ENCODE measurements at regions of chr4 and their contacts with region 1.

Region 1: GRCh38 chr4:40840985-40841571 is 91.3 kb downstream of the NSUN7 start:
- DNase-seq: peak; percentile 95
- ATAC-seq: peak; percentile 90
- H3K4me3 Mint-ChIP-seq: no peak overlapping the region
- H3K27ac Mint-ChIP-seq: no peak overlapping the region
- H3K4me1 Mint-ChIP-seq: peaks cover 5% of the 10 kb centered on the region
- H3K27me3 Mint-ChIP-seq: peaks cover 7% of the 10 kb centered on the region
- CTCF ChIP-seq: peak; percentile 77

Region 2: DNA sequence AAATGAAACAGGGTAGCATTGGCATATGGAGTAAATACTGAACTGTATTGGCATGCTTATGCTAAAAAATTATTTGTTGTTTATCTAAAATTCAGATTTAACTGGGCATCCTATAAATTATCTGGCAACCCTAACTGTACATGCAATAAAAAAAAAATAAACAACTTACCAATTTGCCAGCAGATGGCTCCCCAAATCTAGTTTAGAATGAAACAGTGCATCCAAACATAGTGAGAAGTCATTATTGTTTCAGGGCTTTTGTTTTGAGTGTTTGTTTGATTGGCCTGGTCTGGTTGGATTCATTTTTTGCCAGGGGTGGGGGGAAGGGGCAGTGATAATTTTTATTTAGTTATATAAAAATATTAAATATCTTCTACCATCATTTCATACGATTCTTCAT is 104.2 kb before region 1 on chr4:
- CTCF ChIA-PET with region 1: interaction called, 89 read pairs
- POLR2A ChIA-PET with region 1: no interaction called
- intact Hi-C with region 1: loop called (anchors 5 kb)
- DNase-seq: peak; percentile 29
- ATAC-seq: no peak
- H3K4me3 Mint-ChIP-seq: no peak overlapping the region
- H3K27ac Mint-ChIP-seq: no peak overlapping the region
- H3K4me1 Mint-ChIP-seq: peaks cover 9% of the 10 kb centered on the region
- H3K27me3 Mint-ChIP-seq: peaks cover 3% of the 10 kb centered on the region
- CTCF ChIP-seq: peak; percentile 31

Region 3: GRCh38 chr4:40856277-40856821 is 15.3 kb after region 1 on chr4:
- CTCF ChIA-PET with region 1: interaction called, 13 read pairs
- POLR2A ChIA-PET with region 1: no interaction called
- intact Hi-C with region 1: no loop called
- DNase-seq: no peak
- ATAC-seq: no peak
- H3K4me3 Mint-ChIP-seq: peak overlapping the region; percentile 61
- H3K27ac Mint-ChIP-seq: no peak overlapping the region
- H3K4me1 Mint-ChIP-seq: no peaks in the 10 kb centered on the region
- H3K27me3 Mint-ChIP-seq: peaks cover 53% of the 10 kb centered on the region
- CTCF ChIP-seq: no peak

Region 4: GRCh38 chr4:40881851-40882250 is 40.8 kb after region 1 on chr4:
- CTCF ChIA-PET with region 1: no interaction called
- POLR2A ChIA-PET with region 1: no interaction called
- intact Hi-C with region 1: no loop called
- DNase-seq: no peak
- ATAC-seq: no peak
- H3K4me3 Mint-ChIP-seq: no peak overlapping the region
- H3K27ac Mint-ChIP-seq: no peak overlapping the region
- H3K4me1 Mint-ChIP-seq: no peaks in the 10 kb centered on the region
- H3K27me3 Mint-ChIP-seq: peaks cover 9% of the 10 kb centered on the region
- CTCF ChIP-seq: no peak

Region 5: DNA sequence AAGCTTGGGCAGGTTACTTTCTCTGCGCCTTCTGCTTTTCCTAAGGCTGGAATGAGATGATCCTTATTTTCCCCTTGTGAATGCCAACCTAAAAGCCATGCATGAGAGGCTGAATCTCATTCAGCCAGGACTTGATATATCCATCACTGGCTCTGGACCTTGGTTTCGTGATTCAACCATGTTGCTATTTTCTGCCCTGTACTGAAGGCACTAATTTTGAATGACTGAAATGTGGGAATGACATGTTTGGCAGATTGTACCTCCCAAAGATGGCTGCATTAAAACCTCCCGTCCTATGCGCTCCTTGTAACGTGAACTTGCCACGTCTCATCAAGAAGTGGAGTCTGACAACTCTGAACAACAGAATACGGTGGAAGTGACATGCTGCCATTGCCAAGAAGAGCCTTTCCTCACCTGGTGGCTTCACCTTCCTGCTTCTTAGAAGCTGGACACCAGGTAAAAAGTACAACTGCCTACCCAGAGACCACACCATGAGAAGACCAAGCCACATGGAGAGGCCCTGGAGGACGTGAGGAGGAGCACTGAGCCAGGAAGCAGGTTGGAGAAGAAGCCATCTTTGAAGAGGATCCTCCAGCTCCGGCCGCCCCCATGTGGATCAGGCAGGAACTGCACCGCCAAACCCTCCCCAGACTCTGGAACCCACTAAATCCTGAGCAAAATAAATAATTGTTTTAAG is 83.2 kb after region 1 on chr4:
- CTCF ChIA-PET with region 1: interaction called, 10 read pairs
- POLR2A ChIA-PET with region 1: interaction called, 3 read pairs
- intact Hi-C with region 1: no loop called
- DNase-seq: peak; percentile 90
- ATAC-seq: peak; percentile 93
- H3K4me3 Mint-ChIP-seq: no peak overlapping the region
- H3K27ac Mint-ChIP-seq: peak overlapping the region; percentile 92
- H3K4me1 Mint-ChIP-seq: peaks cover 9% of the 10 kb centered on the region
- H3K27me3 Mint-ChIP-seq: peaks cover 21% of the 10 kb centered on the region
- CTCF ChIP-seq: peak; percentile 91